K562 (cell line): ENCODE measurements at regions of chr17 and their contacts with region 1.

Region 1: DNA sequence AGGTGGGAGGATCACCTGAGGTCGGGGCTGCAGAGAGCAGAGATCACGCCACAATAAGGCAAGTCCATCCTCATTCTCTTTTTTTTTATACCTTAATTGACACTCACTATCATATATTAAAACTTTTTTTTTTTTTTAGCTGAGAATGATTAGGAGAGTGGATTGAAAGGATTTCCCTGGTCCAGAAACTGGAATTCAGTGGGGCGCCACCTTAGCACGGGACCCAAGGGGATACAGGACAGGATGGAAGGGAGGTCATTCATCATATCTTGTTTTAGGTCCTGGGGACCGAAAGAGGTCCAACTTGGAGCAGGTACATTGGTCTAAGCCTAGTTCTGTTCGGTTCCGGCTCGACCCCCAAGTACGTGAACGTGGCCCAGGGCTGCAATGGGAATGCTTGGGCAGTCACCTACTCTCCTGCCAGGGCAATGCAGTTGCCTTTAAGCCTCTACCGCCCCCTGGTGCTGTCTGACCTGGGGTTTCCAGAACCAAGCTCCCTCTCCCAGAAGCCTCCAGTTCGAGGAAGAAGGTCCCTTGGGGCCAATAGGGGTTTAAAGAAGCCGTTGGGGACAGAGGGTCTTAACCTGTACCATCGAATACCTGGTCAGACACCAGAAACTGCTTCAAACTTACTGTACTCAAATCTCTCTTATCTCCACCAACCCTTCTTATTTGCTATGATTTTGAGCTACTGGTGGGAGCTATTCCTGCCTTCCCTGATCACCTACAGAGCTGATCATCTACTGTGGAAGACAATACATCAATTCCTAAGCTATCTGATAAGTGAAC is 19.9 kb upstream of the GPATCH8 start:
- DNase-seq: peak; percentile 60 to 82 (median 72)
- ATAC-seq: peak; percentile 100
- H3K4me3 ChIP-seq: no peak overlapping the region
- H3K27ac ChIP-seq: no peak overlapping the region
- H3K4me1 ChIP-seq: peaks cover 2 to 3% of the 10 kb centered on the region in 2 experiments; a peak in 3 of 5 replicates
- H3K27me3 ChIP-seq: no peaks in the 10 kb centered on the region
- CTCF ChIP-seq: peak; percentile 86 to 89 (median 89)
- EP300 ChIP-seq: no peak
- POLR2A ChIP-seq: no peak
- RAD21 ChIP-seq: peak; percentile 73 to 89

Region 2: DNA sequence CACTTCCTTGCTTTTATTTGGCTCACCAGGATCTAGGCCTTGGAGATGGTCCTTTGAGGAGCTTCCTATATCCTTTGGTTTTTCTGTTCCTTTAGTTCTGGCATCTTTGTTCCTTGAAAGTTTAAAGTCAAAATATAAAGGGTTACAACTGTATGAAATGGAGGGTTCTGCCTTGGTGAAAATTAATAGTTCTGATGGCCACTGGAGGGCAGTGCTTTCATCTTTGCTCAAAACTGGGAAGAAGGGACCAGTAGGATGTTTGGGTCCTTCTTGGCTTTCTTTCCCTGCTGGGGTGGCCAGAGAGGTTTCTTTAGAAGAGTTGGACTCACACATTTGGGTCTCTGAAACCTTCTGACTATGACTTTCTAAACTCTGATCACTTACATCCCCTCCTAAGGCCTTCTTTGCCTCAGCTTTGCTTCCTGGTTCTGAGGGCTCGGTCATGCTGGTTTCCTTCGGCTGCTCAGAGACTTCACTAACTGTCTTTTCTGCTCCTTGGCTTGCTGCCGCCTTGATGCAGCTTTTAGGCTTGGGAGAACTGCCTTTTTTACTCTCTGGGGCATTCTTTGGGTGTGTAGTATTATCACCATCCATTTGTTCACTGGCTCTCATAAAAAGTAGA is 122.7 kb before region 1 on chr17:
- CTCF ChIA-PET with region 1: interaction called, 17 read pairs
- POLR2A ChIA-PET with region 1: no interaction called
- in situ Hi-C with region 1: no loop called
- intact Hi-C with region 1: loop called (anchors 2 kb)
- DNase-seq: peak in 3 of 4 experiments; percentile 37 to 58 (median 45)
- ATAC-seq: peak; percentile 83
- H3K4me3 ChIP-seq: no peak overlapping the region
- H3K27ac ChIP-seq: no peak overlapping the region
- H3K4me1 ChIP-seq: 0 out of 5 replicates have a peak, but pooled peaks cover 0 to 2% of the 10 kb centered on the region in 2 experiments
- H3K27me3 ChIP-seq: no peaks in the 10 kb centered on the region
- CTCF ChIP-seq: peak; percentile 52 to 66 (median 64)
- EP300 ChIP-seq: no peak
- POLR2A ChIP-seq: no peak
- RAD21 ChIP-seq: peak in 1 of 2 experiments; percentile 61; a peak in 2 of 4 replicates